ENCODE measurements at regions of chr4 and their contacts with region 1.

Region 1: GRCh38 chr4:113394730-113395530 is 345.5 kb downstream of the ANK2 start:
- DNase-seq: peak; percentile 90
- H3K4me3 Mint-ChIP-seq: no peak overlapping the region
- H3K27ac Mint-ChIP-seq: no peak overlapping the region
- H3K4me1 Mint-ChIP-seq: peaks cover 2% of the 10 kb centered on the region
- H3K27me3 Mint-ChIP-seq: peaks cover 5% of the 10 kb centered on the region

Region 2: DNA sequence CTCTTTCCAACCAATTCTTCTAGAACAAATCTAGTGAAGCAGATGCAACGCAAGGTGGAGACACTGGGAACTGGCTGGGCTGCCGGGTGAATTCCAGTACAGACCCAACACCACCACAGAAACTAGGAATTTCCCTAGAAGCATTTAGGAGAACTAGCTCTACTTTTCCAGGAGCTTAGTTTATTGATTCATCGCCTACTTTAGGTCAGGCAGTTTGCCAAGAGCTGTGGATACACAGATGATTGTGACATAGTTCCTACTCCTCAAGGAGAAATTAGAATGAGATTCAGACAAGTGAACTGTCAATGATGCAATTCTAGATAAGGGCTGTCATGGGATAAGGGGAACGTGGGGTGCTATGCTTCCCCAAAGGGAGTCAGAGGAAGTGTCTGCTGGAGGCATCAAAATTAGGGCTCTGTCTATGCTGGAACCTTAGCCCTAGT is 16.6 kb after region 1 on chr4:
- intact Hi-C with region 1: no loop called
- DNase-seq: no peak
- H3K4me3 Mint-ChIP-seq: no peak overlapping the region
- H3K27ac Mint-ChIP-seq: no peak overlapping the region
- H3K4me1 Mint-ChIP-seq: peaks cover 6% of the 10 kb centered on the region
- H3K27me3 Mint-ChIP-seq: peaks cover 4% of the 10 kb centered on the region

Region 3: GRCh38 chr4:113474017-113474416 is 79.1 kb after region 1 on chr4:
- intact Hi-C with region 1: loop called (anchors 1 kb)
- DNase-seq: no peak
- H3K4me3 Mint-ChIP-seq: no peak overlapping the region
- H3K27ac Mint-ChIP-seq: peak overlapping the region; percentile 79
- H3K4me1 Mint-ChIP-seq: peaks cover 27% of the 10 kb centered on the region
- H3K27me3 Mint-ChIP-seq: no peaks in the 10 kb centered on the region

Region 4: DNA sequence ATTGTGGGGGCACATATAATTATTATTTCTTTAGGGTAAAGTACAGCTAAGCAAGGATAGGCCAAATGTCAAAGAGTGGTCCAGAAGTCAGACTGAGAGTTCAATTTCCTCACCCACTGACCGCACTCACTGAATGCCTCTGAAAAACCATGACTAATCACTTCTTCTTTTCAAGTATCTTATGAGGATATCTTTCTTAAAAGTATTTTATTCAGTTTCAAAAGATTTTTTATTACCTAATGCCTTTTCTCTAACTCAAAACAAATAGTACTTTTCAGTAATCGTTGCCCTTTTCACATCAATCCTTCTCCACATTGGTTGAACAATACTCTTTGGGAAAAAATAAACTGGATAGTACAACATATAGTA is 428.3 kb after region 1 on chr4:
- intact Hi-C with region 1: loop called (anchors 5 kb)
- DNase-seq: no peak
- H3K4me3 Mint-ChIP-seq: no peak overlapping the region
- H3K27ac Mint-ChIP-seq: no peak overlapping the region
- H3K4me1 Mint-ChIP-seq: peaks cover 24% of the 10 kb centered on the region
- H3K27me3 Mint-ChIP-seq: no peaks in the 10 kb centered on the region

Region 5: GRCh38 chr4:113858924-113859323 is 464.0 kb after region 1 on chr4:
- intact Hi-C with region 1: no loop called
- DNase-seq: no peak
- H3K4me3 Mint-ChIP-seq: no peak overlapping the region
- H3K27ac Mint-ChIP-seq: no peak overlapping the region
- H3K4me1 Mint-ChIP-seq: no peaks in the 10 kb centered on the region
- H3K27me3 Mint-ChIP-seq: peaks cover 3% of the 10 kb centered on the region

Region 6: GRCh38 chr4:114072781-114073180 is 677.9 kb after region 1 on chr4:
- intact Hi-C with region 1: loop called (anchors 1 kb)
- DNase-seq: no peak
- H3K4me3 Mint-ChIP-seq: no peak overlapping the region
- H3K27ac Mint-ChIP-seq: no peak overlapping the region
- H3K4me1 Mint-ChIP-seq: no peaks in the 10 kb centered on the region
- H3K27me3 Mint-ChIP-seq: peaks cover 31% of the 10 kb centered on the region

Region 7: DNA sequence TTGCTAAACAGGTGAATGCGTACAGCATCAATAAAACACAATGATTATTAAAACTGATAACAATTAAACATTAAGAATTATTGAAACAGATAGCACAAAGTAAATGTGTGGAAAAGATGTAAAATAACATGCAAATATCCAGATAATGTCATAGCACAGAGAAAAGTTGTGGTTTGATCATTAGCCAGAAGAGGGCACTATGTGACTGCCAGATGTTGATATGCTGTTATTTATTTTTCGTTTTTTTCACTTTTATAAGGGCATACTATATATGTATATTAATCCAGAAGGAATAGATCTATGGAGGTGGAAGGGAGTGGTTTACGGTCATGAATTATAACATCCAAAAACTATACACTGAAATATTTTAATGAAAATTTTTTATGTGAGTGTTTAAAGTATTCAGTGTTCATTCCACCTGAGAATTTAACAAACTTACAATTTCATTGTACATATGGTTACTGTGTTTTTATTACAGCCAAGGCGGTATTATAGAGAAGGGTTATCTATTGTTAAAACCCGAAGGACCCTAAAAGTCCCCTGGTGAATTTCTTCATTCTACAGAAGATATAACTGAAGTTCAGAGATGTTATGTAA is 991.8 kb after region 1 on chr4:
- intact Hi-C with region 1: loop called (anchors 10 kb)
- DNase-seq: no peak
- H3K4me3 Mint-ChIP-seq: no peak overlapping the region
- H3K27ac Mint-ChIP-seq: no peak overlapping the region
- H3K4me1 Mint-ChIP-seq: no peaks in the 10 kb centered on the region
- H3K27me3 Mint-ChIP-seq: no peaks in the 10 kb centered on the region

Region 8: GRCh38 chr4:114694770-114695169 is 1299.8 kb after region 1 on chr4:
- intact Hi-C with region 1: loop called (anchors 10 kb)
- DNase-seq: no peak
- H3K4me3 Mint-ChIP-seq: no peak overlapping the region
- H3K27ac Mint-ChIP-seq: no peak overlapping the region
- H3K4me1 Mint-ChIP-seq: peaks cover 6% of the 10 kb centered on the region
- H3K27me3 Mint-ChIP-seq: peaks cover 3% of the 10 kb centered on the region